Right ventricle myocardium inferior (tissue), 1 donor: ENCODE measurements at regions of chr4 and their contacts with region 1.

Region 1: GRCh38 chr4:123340381-123340701 is 56.3 kb upstream of the SPRY1 start:
- DNase-seq: no peak
- ATAC-seq: no peak

Region 2: DNA sequence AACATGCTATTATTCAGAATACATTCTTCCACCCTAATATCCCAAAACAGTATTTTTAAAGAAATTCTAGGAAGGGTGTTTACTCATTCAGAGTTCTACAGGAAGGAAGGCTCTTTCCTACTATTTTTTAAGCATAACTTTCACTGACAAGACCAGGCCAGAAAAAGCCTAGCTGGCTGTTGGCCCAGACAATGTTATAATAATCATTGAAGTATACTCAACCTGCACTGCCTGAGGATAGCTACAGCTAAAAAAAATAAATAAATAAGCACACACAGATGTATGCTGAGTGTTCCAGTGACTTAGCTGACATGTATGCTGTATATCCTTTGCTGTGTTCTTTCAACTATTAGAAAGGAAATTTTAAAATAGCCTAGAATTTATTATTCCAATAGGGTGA is 89.5 kb before region 1 on chr4:
- intact Hi-C with region 1: loop called (anchors 5 kb)
- DNase-seq: peak; percentile 65
- ATAC-seq: peak; percentile 75

Region 3: DNA sequence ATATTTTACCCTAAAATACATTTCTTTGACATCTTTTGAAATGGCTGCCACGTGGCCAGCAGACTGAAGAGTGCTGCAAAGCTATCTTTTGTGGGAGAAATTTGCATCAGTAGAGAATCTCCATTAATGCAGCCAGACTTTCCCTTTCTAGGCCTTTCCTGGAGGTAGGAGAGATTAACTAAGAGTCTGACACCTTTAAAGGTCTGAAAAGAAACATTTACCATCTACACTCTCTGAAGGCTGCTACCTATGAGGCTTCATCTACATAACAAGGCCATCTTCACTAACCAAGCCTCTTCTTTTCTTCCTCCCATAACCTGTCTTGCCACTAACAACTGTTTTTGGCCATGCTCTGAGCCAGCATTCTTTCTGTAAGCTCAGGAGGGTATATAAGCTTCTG is 38.5 kb after region 1 on chr4:
- intact Hi-C with region 1: no loop called
- DNase-seq: no peak
- ATAC-seq: no peak

Region 4: GRCh38 chr4:123430031-123430430 is 89.7 kb after region 1 on chr4:
- intact Hi-C with region 1: no loop called
- DNase-seq: no peak
- ATAC-seq: no peak